CD8-positive, alpha-beta T cell (primary cell): ENCODE measurements at regions of chr17 and their contacts with region 1.

Region 1: DNA sequence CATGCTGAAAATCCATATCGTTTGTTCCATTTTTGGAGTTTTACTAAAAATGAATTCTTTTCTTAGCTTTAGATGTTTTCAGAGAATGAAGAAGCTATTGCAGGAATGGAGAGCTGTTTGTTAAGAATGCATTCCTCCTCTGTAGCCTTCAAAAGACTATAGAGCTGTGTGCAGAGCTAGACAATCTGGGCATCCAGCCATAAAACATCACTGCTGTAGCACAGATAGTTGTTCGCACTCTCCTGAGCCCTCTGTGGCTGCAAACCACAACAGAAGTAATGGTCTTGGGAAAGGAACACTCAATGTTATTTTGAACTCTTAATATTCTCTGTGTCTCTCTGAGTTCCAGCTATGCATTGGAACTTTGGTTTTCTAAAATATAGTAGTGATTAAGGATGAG is 4.9 kb downstream of the TNRC6C start:
- DNase-seq: peak; percentile 13 to 90 (median 67)
- ATAC-seq: peak; percentile 53
- H3K4me3 ChIP-seq: peak overlapping the region; percentile 2 to 23
- H3K4me3 Mint-ChIP-seq: peak overlapping the region; percentile 71
- H3K27ac ChIP-seq: no peak overlapping the region
- H3K27ac Mint-ChIP-seq: peak overlapping the region; percentile 56
- H3K4me1 ChIP-seq: peaks cover 75% of the 10 kb centered on the region
- H3K4me1 Mint-ChIP-seq: peaks cover 74% of the 10 kb centered on the region
- H3K27me3 ChIP-seq: no peaks in the 10 kb centered on the region
- H3K27me3 Mint-ChIP-seq: no peaks in the 10 kb centered on the region
- CTCF ChIP-seq: no peak

Region 2: GRCh38 chr17:76296186-76296585 is 1667.3 kb before region 1 on chr17:
- CTCF ChIA-PET with region 1: no interaction called
- POLR2A ChIA-PET with region 1: no interaction called
- intact Hi-C with region 1: no loop called
- DNase-seq: no peak
- ATAC-seq: no peak
- H3K4me3 ChIP-seq: no peak overlapping the region
- H3K4me3 Mint-ChIP-seq: no peak overlapping the region
- H3K27ac ChIP-seq: no peak overlapping the region
- H3K27ac Mint-ChIP-seq: no peak overlapping the region
- H3K4me1 ChIP-seq: no peaks in the 10 kb centered on the region
- H3K4me1 Mint-ChIP-seq: peaks cover 1% of the 10 kb centered on the region
- H3K27me3 ChIP-seq: no peaks in the 10 kb centered on the region
- H3K27me3 Mint-ChIP-seq: no peaks in the 10 kb centered on the region
- CTCF ChIP-seq: no peak

Region 3: GRCh38 chr17:77501101-77501566 is 462.3 kb before region 1 on chr17:
- CTCF ChIA-PET with region 1: no interaction called
- POLR2A ChIA-PET with region 1: no interaction called
- intact Hi-C with region 1: no loop called
- DNase-seq: peak in 4 of 9 experiments; percentile 33 to 57 (median 48)
- ATAC-seq: no peak
- H3K4me3 ChIP-seq: no peak overlapping the region
- H3K4me3 Mint-ChIP-seq: no peak overlapping the region
- H3K27ac ChIP-seq: no peak overlapping the region
- H3K27ac Mint-ChIP-seq: peak overlapping the region; percentile 49
- H3K4me1 ChIP-seq: no peaks in the 10 kb centered on the region
- H3K4me1 Mint-ChIP-seq: no peaks in the 10 kb centered on the region
- H3K27me3 ChIP-seq: no peaks in the 10 kb centered on the region
- H3K27me3 Mint-ChIP-seq: no peaks in the 10 kb centered on the region
- CTCF ChIP-seq: peak; percentile 53

Region 4: DNA sequence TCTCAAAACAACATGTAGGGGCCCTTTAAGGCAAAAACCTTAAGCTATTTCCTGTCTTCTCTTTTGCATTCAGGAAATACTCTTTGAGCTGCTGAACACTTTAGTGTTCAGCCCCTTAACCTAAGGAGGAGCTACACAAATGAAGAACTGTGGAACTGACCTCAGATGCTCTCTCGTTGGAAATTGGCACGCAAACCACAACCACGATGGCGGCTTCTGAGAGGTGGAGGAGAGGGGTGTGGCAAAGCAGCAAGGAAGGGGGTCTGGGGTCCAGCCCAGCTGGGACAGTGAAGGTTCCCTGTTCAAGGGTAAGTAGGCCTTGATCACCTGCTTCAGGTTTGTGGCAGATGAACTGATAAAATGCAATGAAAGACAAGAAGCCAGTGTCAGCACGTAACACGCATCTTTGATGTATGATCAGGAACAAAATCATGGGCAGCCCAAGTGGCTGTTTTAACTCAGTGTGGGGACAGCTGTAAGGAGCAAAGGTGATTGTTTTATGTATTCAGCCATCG is 296.5 kb before region 1 on chr17:
- CTCF ChIA-PET with region 1: no interaction called
- POLR2A ChIA-PET with region 1: interaction called, 36 read pairs
- intact Hi-C with region 1: loop called (anchors 1 to 5 kb)
- DNase-seq: peak; percentile 33 to 91 (median 71)
- ATAC-seq: peak; percentile 89
- H3K4me3 ChIP-seq: peak overlapping the region; percentile 47 to 53
- H3K4me3 Mint-ChIP-seq: peak overlapping the region; percentile 83
- H3K27ac ChIP-seq: peak overlapping the region; percentile 61 to 87
- H3K27ac Mint-ChIP-seq: peak overlapping the region; percentile 97
- H3K4me1 ChIP-seq: peaks cover 33% of the 10 kb centered on the region
- H3K4me1 Mint-ChIP-seq: peaks cover 58% of the 10 kb centered on the region
- H3K27me3 ChIP-seq: no peaks in the 10 kb centered on the region
- H3K27me3 Mint-ChIP-seq: no peaks in the 10 kb centered on the region
- CTCF ChIP-seq: no peak

Region 5: DNA sequence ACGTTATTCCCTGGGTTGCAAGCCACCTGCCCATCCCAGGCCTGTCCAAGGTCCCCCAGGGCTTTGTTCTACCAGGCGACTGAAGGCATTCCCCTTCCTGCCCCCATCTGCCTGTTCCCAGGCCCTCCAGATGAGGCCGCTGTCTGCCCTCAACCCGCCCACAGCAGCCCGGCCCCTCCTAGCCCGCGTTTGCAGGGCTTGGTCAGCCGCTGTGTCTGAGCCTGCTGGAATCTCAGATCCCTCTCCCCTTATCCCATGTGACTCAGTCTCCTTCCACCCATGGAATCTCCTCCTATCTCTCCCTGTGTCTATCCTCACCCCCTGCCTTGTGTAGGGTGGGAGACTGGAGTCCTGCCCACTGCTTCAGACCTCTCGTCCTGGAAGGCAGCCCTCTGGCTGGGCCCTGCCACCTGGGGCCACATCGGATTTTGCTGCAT is 191.0 kb before region 1 on chr17:
- CTCF ChIA-PET with region 1: interaction called, 3 read pairs
- POLR2A ChIA-PET with region 1: interaction called, 15 read pairs
- intact Hi-C with region 1: loop called (anchors 2 kb)
- DNase-seq: peak; percentile 46 to 82 (median 67)
- ATAC-seq: peak; percentile 95
- H3K4me3 ChIP-seq: no peak overlapping the region
- H3K4me3 Mint-ChIP-seq: no peak overlapping the region
- H3K27ac ChIP-seq: no peak overlapping the region
- H3K27ac Mint-ChIP-seq: peak overlapping the region; percentile 73
- H3K4me1 ChIP-seq: peaks cover 7% of the 10 kb centered on the region
- H3K4me1 Mint-ChIP-seq: peaks cover 13% of the 10 kb centered on the region
- H3K27me3 ChIP-seq: no peaks in the 10 kb centered on the region
- H3K27me3 Mint-ChIP-seq: no peaks in the 10 kb centered on the region
- CTCF ChIP-seq: peak; percentile 74

Region 6: DNA sequence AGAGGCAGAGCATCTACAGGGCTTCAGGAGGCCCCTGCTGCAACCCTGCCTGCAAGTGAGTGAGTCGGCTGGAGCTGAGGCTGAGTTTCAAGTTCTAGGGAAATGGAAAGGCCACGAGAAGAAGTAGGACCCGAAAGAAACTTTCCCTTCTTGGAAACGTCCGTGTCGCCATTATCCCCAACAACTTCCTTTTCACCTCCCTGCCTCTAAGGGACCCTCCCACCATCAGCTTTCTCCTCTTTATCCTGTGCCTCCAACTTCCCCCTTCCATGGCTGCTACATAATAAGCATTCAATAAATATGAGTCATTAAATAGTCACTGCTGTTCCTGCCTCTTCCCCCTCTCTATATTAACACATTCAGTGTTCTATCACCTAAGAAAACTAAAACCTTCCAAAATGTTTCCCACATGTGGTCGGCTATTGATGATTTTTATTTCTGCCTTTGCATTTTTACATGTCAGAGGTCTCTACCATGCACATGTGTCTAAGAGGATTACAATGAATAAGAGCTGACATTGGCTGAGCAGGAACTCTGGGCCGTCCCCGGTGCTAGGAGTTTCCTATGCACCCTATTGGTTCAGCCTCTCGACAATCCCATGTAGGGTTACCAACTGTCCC is 120.8 kb before region 1 on chr17:
- CTCF ChIA-PET with region 1: no interaction called
- POLR2A ChIA-PET with region 1: interaction called, 24 read pairs
- intact Hi-C with region 1: loop called (anchors 1 to 5 kb)
- DNase-seq: peak in 1 of 9 experiments; percentile 36
- ATAC-seq: no peak
- H3K4me3 ChIP-seq: no peak overlapping the region
- H3K4me3 Mint-ChIP-seq: no peak overlapping the region
- H3K27ac ChIP-seq: peak overlapping the region in 1 of 2 experiments; percentile 25
- H3K27ac Mint-ChIP-seq: peak overlapping the region; percentile 93
- H3K4me1 ChIP-seq: peaks cover 53% of the 10 kb centered on the region
- H3K4me1 Mint-ChIP-seq: peaks cover 64% of the 10 kb centered on the region
- H3K27me3 ChIP-seq: no peaks in the 10 kb centered on the region
- H3K27me3 Mint-ChIP-seq: no peaks in the 10 kb centered on the region
- CTCF ChIP-seq: no peak

Region 7: DNA sequence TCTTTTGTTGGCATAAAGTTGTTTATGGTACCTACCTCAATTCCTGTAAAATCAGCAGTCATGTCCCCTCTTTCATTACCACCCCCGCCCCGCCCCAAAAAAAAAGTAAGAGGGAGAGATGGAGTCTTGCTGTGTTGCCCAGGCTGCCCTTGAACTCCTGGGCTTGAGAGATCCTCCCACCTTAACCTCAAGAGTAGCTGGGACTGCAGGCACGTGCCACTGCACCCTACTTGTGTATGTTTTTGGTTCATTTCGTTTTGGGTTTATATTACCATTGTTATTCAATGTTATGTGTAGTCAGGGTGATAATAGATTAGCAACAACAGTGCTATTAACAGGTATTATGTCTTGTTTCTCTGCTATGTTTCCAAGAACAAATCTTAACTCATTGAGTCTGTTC is 11.0 kb after region 1 on chr17:
- CTCF ChIA-PET with region 1: interaction called, 4 read pairs
- POLR2A ChIA-PET with region 1: interaction called, 24 read pairs
- intact Hi-C with region 1: loop called in 1 of 2 experiments (anchors 1 kb)
- DNase-seq: peak in 1 of 9 experiments; percentile 34
- ATAC-seq: peak; percentile 36
- H3K4me3 ChIP-seq: no peak overlapping the region
- H3K4me3 Mint-ChIP-seq: no peak overlapping the region
- H3K27ac ChIP-seq: no peak overlapping the region
- H3K27ac Mint-ChIP-seq: peak overlapping the region; percentile 0
- H3K4me1 ChIP-seq: peaks cover 57% of the 10 kb centered on the region
- H3K4me1 Mint-ChIP-seq: peaks cover 81% of the 10 kb centered on the region
- H3K27me3 ChIP-seq: no peaks in the 10 kb centered on the region
- H3K27me3 Mint-ChIP-seq: no peaks in the 10 kb centered on the region
- CTCF ChIP-seq: no peak

Region 8: GRCh38 chr17:77999413-78000173 is 36.2 kb after region 1 on chr17:
- CTCF ChIA-PET with region 1: no interaction called
- POLR2A ChIA-PET with region 1: interaction called, 9 read pairs
- intact Hi-C with region 1: loop called (anchors 5 kb)
- DNase-seq: no peak
- ATAC-seq: no peak
- H3K4me3 ChIP-seq: no peak overlapping the region
- H3K4me3 Mint-ChIP-seq: no peak overlapping the region
- H3K27ac ChIP-seq: no peak overlapping the region
- H3K27ac Mint-ChIP-seq: peak overlapping the region; percentile 66
- H3K4me1 ChIP-seq: peaks cover 54% of the 10 kb centered on the region
- H3K4me1 Mint-ChIP-seq: peaks cover 86% of the 10 kb centered on the region
- H3K27me3 ChIP-seq: no peaks in the 10 kb centered on the region
- H3K27me3 Mint-ChIP-seq: no peaks in the 10 kb centered on the region
- CTCF ChIP-seq: no peak

Region 9: GRCh38 chr17:78075545-78075944 is 112.1 kb after region 1 on chr17:
- CTCF ChIA-PET with region 1: no interaction called
- POLR2A ChIA-PET with region 1: no interaction called
- intact Hi-C with region 1: no loop called
- DNase-seq: no peak
- ATAC-seq: no peak
- H3K4me3 ChIP-seq: no peak overlapping the region
- H3K4me3 Mint-ChIP-seq: no peak overlapping the region
- H3K27ac ChIP-seq: no peak overlapping the region
- H3K27ac Mint-ChIP-seq: no peak overlapping the region
- H3K4me1 ChIP-seq: no peaks in the 10 kb centered on the region
- H3K4me1 Mint-ChIP-seq: no peaks in the 10 kb centered on the region
- H3K27me3 ChIP-seq: no peaks in the 10 kb centered on the region
- H3K27me3 Mint-ChIP-seq: no peaks in the 10 kb centered on the region
- CTCF ChIP-seq: no peak

Region 10: DNA sequence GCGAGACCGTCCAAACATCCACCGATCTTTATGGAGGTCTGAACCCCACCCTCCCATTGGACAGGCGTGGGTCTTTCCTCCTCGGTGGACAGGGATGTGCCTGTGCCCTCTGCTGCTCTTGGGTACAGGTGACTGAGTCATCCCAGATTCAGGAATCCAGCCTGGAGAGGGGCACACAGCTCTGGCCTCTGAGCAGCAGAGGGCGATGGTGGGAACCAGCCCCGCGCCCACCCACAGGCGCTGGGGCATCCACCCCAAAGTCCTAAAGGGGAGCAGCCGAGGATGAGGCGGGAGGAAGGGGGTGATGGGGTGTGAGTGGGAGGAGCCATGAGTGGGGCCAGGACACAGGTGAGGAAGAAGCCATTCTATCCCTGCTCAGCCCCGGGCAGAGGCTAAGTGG is 1146.1 kb after region 1 on chr17:
- CTCF ChIA-PET with region 1: no interaction called
- POLR2A ChIA-PET with region 1: no interaction called
- intact Hi-C with region 1: no loop called
- DNase-seq: no peak
- ATAC-seq: no peak
- H3K4me3 ChIP-seq: no peak overlapping the region
- H3K4me3 Mint-ChIP-seq: no peak overlapping the region
- H3K27ac ChIP-seq: no peak overlapping the region
- H3K27ac Mint-ChIP-seq: no peak overlapping the region
- H3K4me1 ChIP-seq: no peaks in the 10 kb centered on the region
- H3K4me1 Mint-ChIP-seq: no peaks in the 10 kb centered on the region
- H3K27me3 ChIP-seq: no peaks in the 10 kb centered on the region
- H3K27me3 Mint-ChIP-seq: peaks cover 3% of the 10 kb centered on the region
- CTCF ChIP-seq: no peak